ENCODE measurements at regions of chr2 and their contacts with region 1.

Region 1: DNA sequence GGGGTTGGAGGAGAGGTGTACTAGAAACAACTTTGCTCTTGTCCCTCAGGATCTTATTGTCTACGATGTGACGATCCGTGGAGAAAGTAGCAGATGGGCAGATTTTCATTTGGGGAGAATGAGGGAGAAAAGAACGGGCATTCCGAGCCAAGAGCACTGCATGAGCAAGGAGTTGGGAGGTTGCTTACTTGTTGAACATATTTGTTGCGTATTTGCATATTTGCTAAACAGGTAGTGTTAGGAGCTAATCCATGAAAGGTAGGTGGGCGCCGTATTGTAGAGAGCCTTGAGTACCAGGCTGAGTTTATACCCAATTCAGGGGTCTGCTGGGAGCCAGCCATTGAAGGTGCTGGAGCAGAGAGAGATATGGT is 490 bp downstream of the BCS1L start:
- DNase-seq: no peak

Region 2: DNA sequence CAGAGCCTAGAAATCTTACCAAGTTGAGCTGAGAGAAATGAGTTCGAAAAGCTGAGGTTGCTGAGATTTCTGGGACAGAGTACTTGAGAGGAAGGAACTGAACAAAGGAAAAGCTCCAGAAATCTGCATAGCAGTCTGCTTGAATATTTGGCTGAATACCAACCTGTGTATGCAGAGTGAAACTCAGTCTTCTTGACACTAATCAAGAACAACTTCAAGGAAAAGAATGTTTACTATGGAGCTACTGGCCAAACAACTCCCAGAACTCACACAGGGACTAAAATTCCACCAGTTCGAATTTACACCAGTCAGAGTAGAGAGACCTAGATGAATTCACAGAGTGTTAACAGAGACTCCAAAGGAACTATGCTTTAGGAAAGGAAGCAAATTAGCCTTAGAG is 158.3 kb before region 1 on chr2:
- intact Hi-C with region 1: no loop called
- DNase-seq: no peak

Region 3: GRCh38 chr2:218513676-218514075 is 146.3 kb before region 1 on chr2:
- intact Hi-C with region 1: loop called in 1 of 2 experiments (anchors 5 kb)
- DNase-seq: no peak

Region 4: DNA sequence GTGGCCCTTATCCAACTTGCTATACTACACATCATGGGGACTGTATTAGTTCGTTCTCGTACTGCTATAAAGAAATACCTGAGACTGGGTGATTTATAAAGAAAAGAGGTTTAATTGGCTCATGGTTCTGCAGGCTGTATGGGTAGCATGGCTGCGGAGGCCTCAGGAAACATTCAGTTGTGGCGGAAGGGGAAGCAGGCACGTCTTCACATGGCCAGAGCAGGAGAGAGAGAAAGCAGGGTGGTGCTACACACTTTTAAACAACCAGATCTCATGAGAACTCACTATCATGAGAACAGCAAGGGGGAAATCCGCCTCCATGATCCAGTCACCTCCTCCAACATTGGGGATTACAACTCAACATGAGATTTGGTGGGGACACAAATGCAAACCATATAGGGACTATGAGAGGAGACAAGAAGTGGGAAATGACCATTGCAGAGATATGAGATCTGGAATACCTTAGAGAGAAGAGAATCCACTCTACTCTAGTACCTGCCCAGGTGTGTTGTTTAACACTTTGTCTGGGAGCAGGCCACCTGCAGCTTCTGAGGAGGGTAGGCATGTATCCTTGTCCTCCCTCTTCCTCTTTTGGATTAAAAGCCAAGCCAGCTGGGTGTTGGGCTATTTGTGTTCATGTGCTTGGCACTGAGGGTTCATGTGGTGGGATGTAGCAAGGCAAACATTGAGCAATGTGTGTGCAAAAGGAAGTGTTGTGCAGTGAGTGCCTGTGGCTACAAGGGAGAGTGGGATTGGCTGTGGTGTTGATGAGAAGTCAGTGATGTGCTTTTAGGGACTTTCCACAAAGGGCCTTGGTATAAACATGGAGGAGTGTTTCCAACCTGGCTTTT is 73.4 kb after region 1 on chr2:
- intact Hi-C with region 1: no loop called
- DNase-seq: no peak

Region 5: GRCh38 chr2:219308142-219309093 is 648.4 kb after region 1 on chr2:
- intact Hi-C with region 1: no loop called
- DNase-seq: peak; percentile 92